Activated CD8-positive, alpha-beta memory T cell treated with anti-CD3 and anti-CD28 coated beads, Interleukin-2, amount 10 ng/mL, durations not matched to agents 7 days and 5 days (primary cell): ENCODE measurements at regions of chr2 and their contacts with region 1.

Region 1: DNA sequence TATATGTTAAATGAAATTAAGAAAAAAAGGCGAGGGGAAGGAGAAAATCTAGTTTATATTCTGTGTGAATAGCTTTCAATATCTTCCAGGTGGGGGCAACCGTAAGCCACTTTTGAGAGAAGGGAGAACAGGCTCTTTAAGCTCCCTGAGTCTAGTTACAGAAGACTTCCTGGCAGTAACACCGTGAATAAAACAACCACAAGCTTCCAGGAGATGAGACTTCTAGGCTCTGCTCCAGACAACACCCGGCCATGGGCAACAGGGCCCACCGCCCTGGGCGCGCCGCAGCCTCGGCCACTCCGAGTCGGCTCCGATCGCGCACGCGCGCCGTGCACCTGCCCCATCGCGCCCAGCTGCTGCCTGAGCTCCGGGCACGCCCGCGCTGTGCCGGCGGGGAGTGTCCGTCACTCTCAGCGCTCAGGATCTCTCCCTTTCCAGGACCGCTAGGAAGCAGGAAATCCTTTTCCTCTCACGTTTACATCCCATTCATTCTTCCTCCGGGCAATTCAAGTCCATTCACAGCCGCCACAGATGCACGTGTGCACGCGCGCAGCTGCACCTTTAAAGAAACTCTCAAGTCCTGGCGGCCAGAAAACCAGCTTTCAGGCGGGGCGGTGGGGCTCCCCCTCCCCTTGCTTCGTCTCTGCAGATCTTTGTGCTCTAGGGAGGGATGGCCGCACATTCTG is 19.4 kb upstream of the PAX3 start:
- DNase-seq: peak; percentile 59
- ATAC-seq: peak; percentile 70
- H3K4me3 Mint-ChIP-seq: peak overlapping the region; percentile 69
- H3K27ac Mint-ChIP-seq: no peak overlapping the region
- H3K4me1 Mint-ChIP-seq: peaks cover 12% of the 10 kb centered on the region
- H3K27me3 Mint-ChIP-seq: peaks cover 75% of the 10 kb centered on the region

Region 2: DNA sequence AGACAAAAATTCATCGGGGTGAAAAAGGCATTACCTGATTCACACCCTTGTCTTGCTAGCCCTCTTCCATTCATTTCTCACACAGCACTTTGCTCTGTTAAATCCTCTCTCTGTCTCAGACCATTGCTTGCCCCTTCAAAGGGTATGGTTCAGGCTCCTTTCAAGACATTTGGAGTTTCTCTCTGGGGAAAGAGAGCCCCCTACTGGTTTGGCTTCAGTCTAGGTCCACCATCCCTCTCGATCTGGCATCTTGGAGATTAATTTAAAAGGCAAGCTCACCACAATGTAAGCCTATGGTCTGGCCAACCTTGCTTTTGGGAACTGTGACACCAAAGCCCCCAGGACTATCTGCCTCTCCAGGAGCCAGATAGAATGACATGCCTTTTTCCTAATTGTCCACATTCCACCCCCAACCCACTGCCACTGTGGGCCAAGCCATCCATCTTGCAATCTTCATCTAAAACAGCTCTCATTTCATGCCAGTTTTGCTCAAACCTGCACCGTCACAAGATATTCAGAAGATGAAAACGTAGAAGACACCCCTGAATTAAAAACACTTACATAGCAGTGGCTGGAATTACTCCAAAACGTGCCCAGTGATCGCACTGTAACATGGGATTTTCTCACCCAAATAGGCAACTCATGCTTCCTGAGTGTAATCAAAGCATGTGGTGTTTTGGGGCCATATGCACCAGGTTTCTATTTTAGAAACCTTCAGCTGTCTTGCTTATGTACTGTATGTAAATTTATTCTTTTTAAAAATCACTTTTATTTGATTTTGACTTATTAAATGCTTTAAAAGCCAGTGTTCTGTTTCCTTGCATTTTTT is 243.9 kb after region 1 on chr2:
- CTCF ChIA-PET with region 1: interaction called, 26 read pairs
- DNase-seq: peak; percentile 47
- ATAC-seq: peak; percentile 47
- H3K4me3 Mint-ChIP-seq: no peak overlapping the region
- H3K27ac Mint-ChIP-seq: no peak overlapping the region
- H3K4me1 Mint-ChIP-seq: peaks cover 3% of the 10 kb centered on the region
- H3K27me3 Mint-ChIP-seq: no peaks in the 10 kb centered on the region